Naive thymus-derived CD8-positive, alpha-beta T cell (primary cell): ENCODE measurements at regions of chr15 and their contacts with region 1.

Region 1: GRCh38 chr15:31265871-31266711 is 60.5 kb upstream of the KLF13 start:
- DNase-seq: peak; percentile 22 to 89 (median 74)
- ATAC-seq: peak; percentile 80 to 89
- H3K4me3 Mint-ChIP-seq: peak overlapping the region; percentile 62 to 85 (median 80)
- H3K27ac Mint-ChIP-seq: peak overlapping the region; percentile 93 to 100 (median 97)
- H3K4me1 Mint-ChIP-seq: peaks cover 56 to 98% (median 95%) of the 10 kb centered on the region in 4 donors
- H3K27me3 Mint-ChIP-seq: no peaks in the 10 kb centered on the region

Region 2: GRCh38 chr15:31238906-31239305 is 27.2 kb before region 1 on chr15:
- POLR2A ChIA-PET with region 1: interaction called, 10 read pairs
- DNase-seq: no peak
- ATAC-seq: peak in 1 of 2 donors; percentile 26
- H3K4me3 Mint-ChIP-seq: peak overlapping the region in 7 of 10 donors; percentile 4 to 72 (median 26)
- H3K27ac Mint-ChIP-seq: peak overlapping the region; percentile 82 to 97 (median 91)
- H3K4me1 Mint-ChIP-seq: peaks cover 22 to 53% (median 31%) of the 10 kb centered on the region in 4 donors
- H3K27me3 Mint-ChIP-seq: no peaks in the 10 kb centered on the region

Region 3: GRCh38 chr15:31280046-31280830 is 14.1 kb after region 1 on chr15:
- POLR2A ChIA-PET with region 1: interaction called, 10 read pairs
- DNase-seq: peak in 1 of 10 donors; percentile 7
- ATAC-seq: no peak
- H3K4me3 Mint-ChIP-seq: no peak overlapping the region
- H3K27ac Mint-ChIP-seq: peak overlapping the region in 2 of 10 donors; percentile 60 to 71
- H3K4me1 Mint-ChIP-seq: peaks cover 1 to 17% (median 11%) of the 10 kb centered on the region in 4 donors
- H3K27me3 Mint-ChIP-seq: no peaks in the 10 kb centered on the region

Region 4: GRCh38 chr15:31344823-31345605 is 78.9 kb after region 1 on chr15:
- POLR2A ChIA-PET with region 1: interaction called, 13 read pairs
- DNase-seq: peak in 2 of 10 donors; percentile 31 to 65
- ATAC-seq: peak in 1 of 2 donors; percentile 10
- H3K4me3 Mint-ChIP-seq: peak overlapping the region; percentile 81 to 98 (median 92)
- H3K27ac Mint-ChIP-seq: peak overlapping the region; percentile 96 to 100 (median 98)
- H3K4me1 Mint-ChIP-seq: peaks cover 61 to 100% (median 99%) of the 10 kb centered on the region in 4 donors
- H3K27me3 Mint-ChIP-seq: no peaks in the 10 kb centered on the region

Region 5: GRCh38 chr15:31365655-31366127 is 99.6 kb after region 1 on chr15:
- POLR2A ChIA-PET with region 1: interaction called, 133 read pairs
- DNase-seq: peak; percentile 66 to 92 (median 82)
- ATAC-seq: peak; percentile 48 to 61
- H3K4me3 Mint-ChIP-seq: peak overlapping the region; percentile 79 to 95 (median 88)
- H3K27ac Mint-ChIP-seq: peak overlapping the region; percentile 96 to 100 (median 98)
- H3K4me1 Mint-ChIP-seq: peaks cover 59 to 100% (median 99%) of the 10 kb centered on the region in 4 donors
- H3K27me3 Mint-ChIP-seq: no peaks in the 10 kb centered on the region

Region 6: GRCh38 chr15:31483053-31483985 is 217.2 kb after region 1 on chr15:
- POLR2A ChIA-PET with region 1: interaction called, 20 read pairs
- DNase-seq: peak; percentile 33 to 76 (median 50)
- ATAC-seq: peak; percentile 72 to 79
- H3K4me3 Mint-ChIP-seq: peak overlapping the region; percentile 90 to 98 (median 97)
- H3K27ac Mint-ChIP-seq: peak overlapping the region; percentile 89 to 98 (median 96)
- H3K4me1 Mint-ChIP-seq: peaks cover 31 to 69% (median 60%) of the 10 kb centered on the region in 4 donors
- H3K27me3 Mint-ChIP-seq: peaks cover 0 to 6% (median 0%) of the 10 kb centered on the region in 5 donors